Sigmoid colon (tissue), 7 donors: ENCODE measurements at regions of chr20 and their contacts with region 1.

Region 1: GRCh38 chr20:330233-331149 is 5.1 kb downstream of the SOX12 start:
- DNase-seq: peak; percentile 78
- H3K4me3 ChIP-seq: no peak overlapping the region
- H3K27ac ChIP-seq: peak overlapping the region; percentile 29 to 96 (median 60)
- H3K4me1 ChIP-seq: peaks cover 0 to 43% (median 37%) of the 10 kb centered on the region in 4 donors
- H3K27me3 ChIP-seq: no peaks in the 10 kb centered on the region
- CTCF ChIP-seq: peak; percentile 70 to 79 (median 76)
- EP300 ChIP-seq: no peak
- POLR2A ChIP-seq: no peak

Region 2: GRCh38 chr20:208942-209566 is 121.4 kb before region 1 on chr20:
- intact Hi-C with region 1: loop called (anchors 2 kb)
- DNase-seq: no peak
- H3K4me3 ChIP-seq: no peak overlapping the region
- H3K27ac ChIP-seq: no peak overlapping the region
- H3K4me1 ChIP-seq: no peaks in the 10 kb centered on the region
- H3K27me3 ChIP-seq: no peaks in the 10 kb centered on the region
- CTCF ChIP-seq: peak in 3 of 4 experiments; percentile 24 to 35 (median 35)
- EP300 ChIP-seq: no peak
- POLR2A ChIP-seq: no peak

Region 3: GRCh38 chr20:266596-267562 is 63.6 kb before region 1 on chr20:
- intact Hi-C with region 1: loop called (anchors 2 kb)
- DNase-seq: peak; percentile 92
- H3K4me3 ChIP-seq: peak overlapping the region; percentile 30 to 54 (median 51)
- H3K27ac ChIP-seq: peak overlapping the region in 1 of 4 donors; percentile 35
- H3K4me1 ChIP-seq: peaks cover 0 to 10% (median 2%) of the 10 kb centered on the region in 4 donors
- H3K27me3 ChIP-seq: no peaks in the 10 kb centered on the region
- CTCF ChIP-seq: peak; percentile 84 to 98 (median 90)
- EP300 ChIP-seq: no peak
- POLR2A ChIP-seq: no peak

Region 4: DNA sequence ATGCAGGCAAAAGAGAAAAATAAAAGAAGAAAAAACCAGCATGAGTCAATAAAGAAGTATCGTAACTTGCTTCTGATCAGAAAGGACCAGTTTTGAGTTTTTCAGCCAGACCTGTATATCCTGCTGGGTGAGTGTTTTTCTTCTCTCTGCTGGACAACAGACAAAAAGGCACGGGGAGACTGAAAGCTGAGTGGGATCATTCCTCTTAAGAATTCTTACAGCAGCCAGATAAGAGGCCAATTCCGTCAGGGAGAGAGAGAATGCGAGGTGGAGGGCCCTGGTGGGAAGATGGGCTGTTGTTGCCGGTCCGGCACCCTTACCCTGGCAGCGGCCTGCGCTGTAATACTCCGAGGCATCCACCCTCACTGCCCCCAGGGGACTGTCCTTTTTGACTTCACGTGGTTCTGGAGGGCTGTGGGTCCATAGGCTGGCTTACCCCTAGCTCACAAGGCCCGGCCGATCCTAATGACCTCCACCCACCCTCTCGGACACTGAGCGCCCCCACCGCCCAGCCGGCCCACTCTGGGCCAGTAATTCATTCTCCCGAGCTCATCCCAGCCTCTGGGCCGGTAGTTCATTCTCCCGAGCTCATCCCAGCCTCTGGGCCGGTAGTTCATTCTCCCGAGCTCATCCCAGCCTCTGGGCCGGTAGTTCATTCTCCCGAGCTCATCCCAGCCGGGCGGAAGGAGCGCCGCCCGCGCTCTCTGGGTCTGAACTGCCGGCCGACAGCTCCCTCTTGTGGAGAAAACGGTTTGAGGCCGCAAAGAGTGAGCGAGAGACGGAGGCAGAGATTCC is 1446.4 kb after region 1 on chr20:
- intact Hi-C with region 1: no loop called
- DNase-seq: peak; percentile 91
- H3K4me3 ChIP-seq: peak overlapping the region; percentile 38 to 76 (median 58)
- H3K27ac ChIP-seq: peak overlapping the region; percentile 55 to 84 (median 74)
- H3K4me1 ChIP-seq: peaks cover 0 to 16% (median 11%) of the 10 kb centered on the region in 4 donors
- H3K27me3 ChIP-seq: no peaks in the 10 kb centered on the region
- CTCF ChIP-seq: peak; percentile 72 to 82 (median 81)
- EP300 ChIP-seq: no peak
- POLR2A ChIP-seq: no peak